ENCODE measurements at regions of chr10 and their contacts with region 1.

Region 1: DNA sequence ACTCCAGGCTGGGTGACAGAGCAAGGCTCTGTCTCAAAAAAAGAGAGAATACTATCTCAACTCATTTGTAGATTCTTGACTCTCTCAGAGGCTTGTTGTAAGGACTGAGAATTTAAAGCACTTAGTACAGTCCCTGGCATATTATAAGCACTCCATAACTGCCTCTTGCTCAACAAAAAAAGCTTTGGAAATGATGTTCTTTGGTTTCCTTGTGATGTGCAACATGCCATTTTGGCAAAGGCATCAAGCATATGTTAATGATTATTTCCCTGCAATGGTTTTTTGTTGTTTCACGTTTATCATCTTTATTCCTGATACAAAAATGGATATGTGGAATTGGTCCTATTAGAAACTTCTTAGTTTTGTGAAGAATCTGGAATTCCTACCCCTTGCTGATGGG is 15.7 kb downstream of the NOLC1 start:
- DNase-seq: no peak
- H3K4me3 ChIP-seq: no peak overlapping the region
- H3K27ac ChIP-seq: no peak overlapping the region
- H3K4me1 ChIP-seq: no peaks in the 10 kb centered on the region
- H3K27me3 ChIP-seq: no peaks in the 10 kb centered on the region
- CTCF ChIP-seq: no peak

Region 2: DNA sequence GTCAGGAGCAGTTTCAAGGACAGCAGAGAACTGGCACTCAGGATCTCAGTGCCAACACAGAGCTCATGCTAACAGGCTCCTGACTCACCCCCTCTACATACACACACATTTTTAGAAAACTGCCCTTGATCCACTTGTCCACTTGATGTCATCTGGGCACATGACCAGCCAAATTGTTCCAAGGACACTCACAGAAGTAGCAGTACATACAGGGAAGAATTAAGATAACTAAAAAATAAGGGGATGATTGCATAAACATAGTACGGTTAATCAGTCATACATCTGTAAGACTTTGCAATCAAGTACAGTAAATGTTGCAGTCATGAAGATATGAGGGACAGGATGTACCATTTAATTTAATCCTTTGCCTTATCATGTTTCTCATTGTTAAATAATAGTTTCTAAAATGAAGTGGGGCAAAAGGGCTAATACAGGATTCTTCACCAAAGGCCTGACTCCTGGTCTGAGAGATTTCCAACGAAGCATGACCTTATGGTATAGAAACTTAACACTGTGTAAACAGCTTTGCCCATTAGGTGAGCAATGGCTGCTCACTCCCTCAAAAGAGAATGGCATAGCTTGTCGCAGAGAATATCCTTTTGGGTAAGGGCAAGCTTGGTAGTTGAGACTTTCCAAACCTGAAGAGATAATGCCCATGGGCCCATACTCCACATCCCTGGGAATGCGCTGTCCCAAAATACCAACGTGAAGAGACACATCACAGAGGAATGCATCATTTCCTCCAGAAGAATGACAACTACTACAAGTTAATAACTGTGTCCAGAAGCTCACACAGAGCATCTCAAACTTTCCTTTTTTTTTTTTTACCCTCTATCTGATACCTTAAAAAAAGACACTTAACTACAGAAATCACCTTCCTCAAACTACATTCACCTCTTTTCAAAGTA is 206.0 kb before region 1 on chr10:
- CTCF ChIA-PET with region 1: no interaction called
- dilution Hi-C with region 1: no loop called
- in situ Hi-C with region 1: no loop called
- intact Hi-C with region 1: no loop called
- DNase-seq: no peak
- H3K4me3 ChIP-seq: no peak overlapping the region
- H3K27ac ChIP-seq: no peak overlapping the region
- H3K4me1 ChIP-seq: no peaks in the 10 kb centered on the region
- H3K27me3 ChIP-seq: no peaks in the 10 kb centered on the region
- CTCF ChIP-seq: no peak

Region 3: DNA sequence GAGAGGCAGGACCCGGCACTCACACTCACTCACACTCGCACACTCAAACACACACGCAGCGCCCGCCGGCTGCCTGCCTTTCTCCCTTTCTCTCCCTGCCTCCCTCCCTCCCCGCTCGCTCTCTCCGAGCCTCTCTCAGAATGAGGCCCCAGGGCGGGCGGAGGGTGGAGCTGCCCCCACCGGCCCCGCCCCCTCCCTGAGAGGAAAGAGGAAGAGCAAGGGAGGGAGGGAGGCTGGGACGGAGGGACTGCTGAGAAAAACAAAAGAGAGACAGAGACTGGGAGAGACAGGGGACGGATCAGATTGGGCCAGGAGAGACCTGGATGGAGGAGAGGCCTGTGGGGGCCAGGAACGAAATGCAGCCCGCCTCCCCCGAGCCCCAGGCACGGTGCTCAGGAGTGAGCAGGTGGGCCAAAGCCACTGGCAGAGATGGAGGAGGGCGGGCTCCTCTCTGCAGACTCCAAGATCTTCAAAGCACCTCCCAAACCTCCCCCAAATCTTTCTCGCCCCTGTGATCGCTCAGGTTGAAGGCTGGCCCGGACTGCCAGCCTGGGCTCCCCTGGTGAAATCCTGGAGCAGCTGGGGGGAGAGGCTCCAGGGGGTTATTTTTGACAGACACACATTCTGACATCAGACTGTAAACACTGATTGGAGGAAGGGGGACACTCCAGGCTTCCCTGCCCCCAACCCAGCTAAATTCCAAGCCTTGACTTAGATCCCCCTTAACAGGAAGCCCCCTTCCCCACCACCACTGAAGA is 52.8 kb before region 1 on chr10:
- CTCF ChIA-PET with region 1: no interaction called
- dilution Hi-C with region 1: loop called (anchors 5 kb)
- in situ Hi-C with region 1: no loop called
- intact Hi-C with region 1: no loop called
- DNase-seq: peak; percentile 85
- H3K4me3 ChIP-seq: peak overlapping the region; percentile 28 to 92 (median 62)
- H3K27ac ChIP-seq: no peak overlapping the region
- H3K4me1 ChIP-seq: peaks cover 55% of the 10 kb centered on the region
- H3K27me3 ChIP-seq: no peaks in the 10 kb centered on the region
- CTCF ChIP-seq: no peak

Region 4: DNA sequence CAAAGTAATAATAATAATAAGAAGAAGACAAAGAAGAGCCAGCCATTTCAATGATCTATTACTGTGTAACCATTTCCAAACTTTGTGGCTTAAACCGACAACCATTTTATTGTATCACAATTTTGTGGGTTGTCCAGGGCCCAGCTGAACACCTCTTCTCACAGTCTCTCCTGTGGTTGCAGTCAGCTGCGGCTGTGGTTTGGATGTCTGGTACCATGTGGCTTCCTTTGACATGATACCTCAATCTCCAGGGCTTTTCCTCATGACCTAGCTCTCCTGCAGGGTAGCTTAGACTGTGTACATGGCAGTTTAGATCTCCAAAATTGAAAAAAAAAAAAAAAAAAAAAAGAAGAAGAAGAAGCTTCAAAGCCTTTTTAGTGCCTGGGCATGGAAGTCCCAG is 155.1 kb after region 1 on chr10:
- CTCF ChIA-PET with region 1: no interaction called
- dilution Hi-C with region 1: no loop called
- in situ Hi-C with region 1: no loop called
- intact Hi-C with region 1: no loop called
- DNase-seq: no peak
- H3K4me3 ChIP-seq: no peak overlapping the region
- H3K27ac ChIP-seq: no peak overlapping the region
- H3K4me1 ChIP-seq: no peaks in the 10 kb centered on the region
- H3K27me3 ChIP-seq: no peaks in the 10 kb centered on the region
- CTCF ChIP-seq: no peak

Region 5: DNA sequence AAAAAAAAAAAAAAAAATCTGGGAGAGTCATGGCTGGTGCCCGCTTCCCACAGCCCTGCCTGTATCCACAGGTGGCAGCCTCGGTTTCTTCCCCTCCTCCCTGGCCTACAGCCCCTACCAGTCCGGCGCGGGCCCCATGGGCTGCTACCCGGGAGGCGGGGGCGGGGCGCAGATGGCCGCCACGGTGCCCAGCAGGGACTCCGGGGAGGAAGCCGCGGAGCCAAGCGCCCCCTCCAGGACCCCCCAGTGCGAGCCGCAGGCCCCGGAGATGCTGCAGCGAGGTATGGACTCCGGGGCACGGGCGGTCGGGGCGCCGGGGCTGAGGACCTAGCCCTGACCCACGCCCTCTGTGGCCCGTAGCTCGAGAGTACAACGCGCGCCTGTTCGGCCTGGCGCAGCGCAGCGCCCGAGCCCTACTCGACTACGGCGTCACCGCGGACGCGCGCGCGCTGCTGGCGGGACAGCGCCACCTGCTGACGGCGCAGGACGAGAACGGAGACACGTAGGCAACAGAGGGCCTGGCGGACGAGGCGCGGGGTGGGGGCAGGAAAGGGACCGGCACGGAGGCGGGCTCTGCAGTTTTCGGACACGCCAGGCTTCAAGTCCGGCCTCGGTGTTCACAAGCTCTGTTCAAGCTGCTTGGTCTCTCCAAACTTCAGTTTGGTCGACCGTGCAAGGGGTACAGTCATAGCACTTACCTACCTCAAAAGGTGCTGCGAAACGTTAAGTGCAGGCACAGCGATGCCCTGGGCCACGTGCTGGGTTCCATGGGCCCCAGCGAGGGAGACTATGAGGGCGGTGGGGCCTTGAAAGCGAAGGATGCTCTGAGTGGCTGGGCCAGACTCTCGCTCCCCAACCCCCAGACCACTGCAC is 231.6 kb after region 1 on chr10:
- CTCF ChIA-PET with region 1: interaction called, 4 read pairs
- dilution Hi-C with region 1: no loop called
- in situ Hi-C with region 1: no loop called
- intact Hi-C with region 1: loop called (anchors 1 kb)
- DNase-seq: peak; percentile 78
- H3K4me3 ChIP-seq: peak overlapping the region in 2 of 3 experiments; percentile 38 to 50
- H3K27ac ChIP-seq: no peak overlapping the region
- H3K4me1 ChIP-seq: peaks cover 38% of the 10 kb centered on the region
- H3K27me3 ChIP-seq: no peaks in the 10 kb centered on the region
- CTCF ChIP-seq: peak; percentile 73 to 94

Region 6: DNA sequence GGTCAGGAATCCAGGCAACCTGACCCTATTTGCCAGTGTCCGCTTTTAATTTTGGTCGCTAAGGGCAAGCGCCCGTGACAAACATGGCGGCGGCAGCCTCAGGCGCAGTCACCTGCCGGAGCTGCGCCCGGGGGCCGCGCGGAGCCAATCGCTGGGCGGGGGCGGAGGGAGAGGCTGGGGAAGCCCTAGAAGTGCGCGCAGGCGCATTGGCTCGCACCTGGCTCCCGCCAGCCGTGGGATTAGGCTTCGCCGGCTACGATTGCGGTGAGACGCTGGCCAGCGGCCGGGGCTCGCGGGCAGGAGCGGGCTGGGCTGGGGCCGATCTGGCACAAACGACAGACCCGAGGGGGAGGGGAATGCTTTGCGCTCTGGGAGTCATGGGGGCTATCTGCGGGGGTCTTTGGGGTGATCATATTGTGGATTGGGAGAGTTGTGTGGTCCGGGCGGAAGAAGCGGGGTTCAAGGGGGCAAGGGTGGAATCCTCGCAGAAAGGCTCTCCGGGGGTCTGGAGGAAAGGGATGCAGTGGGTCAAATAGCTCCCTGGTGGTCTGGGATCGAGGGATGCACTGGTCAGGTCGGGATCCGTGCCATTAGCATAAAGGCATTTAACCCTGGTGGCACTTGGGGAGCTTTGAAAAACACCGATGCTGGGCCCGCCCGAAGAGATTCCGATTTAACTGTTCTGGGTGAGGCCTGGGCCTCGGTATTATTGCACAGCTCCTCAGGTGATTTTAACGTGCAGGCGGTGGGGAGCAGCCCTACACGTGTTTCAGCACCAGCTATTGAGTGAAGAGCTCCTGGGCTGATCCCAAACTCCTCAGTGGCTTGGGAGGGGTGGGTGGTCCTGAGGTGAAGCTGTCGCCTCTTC is 293.6 kb after region 1 on chr10:
- CTCF ChIA-PET with region 1: no interaction called
- dilution Hi-C with region 1: no loop called
- in situ Hi-C with region 1: no loop called
- intact Hi-C with region 1: loop called (anchors 1 kb)
- DNase-seq: peak; percentile 88
- H3K4me3 ChIP-seq: peak overlapping the region; percentile 43 to 56 (median 54)
- H3K27ac ChIP-seq: peak overlapping the region; percentile 9
- H3K4me1 ChIP-seq: peaks cover 11% of the 10 kb centered on the region
- H3K27me3 ChIP-seq: no peaks in the 10 kb centered on the region
- CTCF ChIP-seq: no peak

Region 7: DNA sequence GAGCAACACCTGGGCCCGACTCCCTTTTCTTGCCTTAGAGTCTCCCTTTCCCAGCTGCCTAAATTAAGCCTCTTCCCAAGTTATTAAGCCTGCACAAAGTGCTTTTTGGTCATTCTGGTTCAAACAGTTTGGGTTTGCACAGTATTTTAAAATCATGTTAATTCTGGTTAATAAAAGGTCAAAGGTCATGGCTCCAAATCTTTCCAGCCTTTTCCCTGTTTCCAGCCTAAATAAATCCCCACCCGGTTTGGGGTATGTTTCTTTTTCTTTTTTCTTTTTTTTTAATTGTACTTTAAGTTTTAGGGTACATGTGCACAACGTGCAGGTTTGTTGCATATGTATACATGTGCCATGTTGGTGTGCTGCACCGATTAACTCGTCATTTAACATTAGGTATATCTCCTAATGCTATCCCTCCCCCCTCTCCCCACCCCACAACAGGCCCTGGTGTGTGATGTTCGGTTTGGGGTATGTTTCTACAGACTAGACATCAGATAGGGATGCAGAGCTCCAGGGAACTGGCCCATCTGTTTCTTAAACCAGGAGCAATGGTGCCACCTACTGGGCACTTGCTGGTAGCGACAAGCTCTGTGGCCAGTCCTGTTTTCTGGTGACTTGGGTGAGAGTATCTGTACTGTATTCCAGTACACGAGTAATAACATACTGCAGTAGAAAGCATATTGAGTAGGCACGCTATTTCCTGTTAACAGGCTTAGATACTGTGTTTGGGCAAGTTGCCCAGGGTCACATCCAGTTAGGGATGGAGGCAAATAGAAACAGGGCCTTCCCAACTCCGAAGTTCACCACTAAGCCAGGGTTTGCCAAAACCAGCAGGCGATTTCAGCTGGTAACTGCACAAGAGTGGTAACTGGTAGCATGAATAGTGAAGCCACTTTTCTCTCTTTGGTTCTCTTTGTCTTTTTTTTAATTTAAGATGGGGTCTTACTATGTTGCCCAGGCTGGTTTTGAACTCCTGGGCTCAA is 415.9 kb after region 1 on chr10:
- CTCF ChIA-PET with region 1: no interaction called
- dilution Hi-C with region 1: no loop called
- in situ Hi-C with region 1: no loop called
- intact Hi-C with region 1: loop called (anchors 1 kb)
- DNase-seq: peak; percentile 66
- H3K4me3 ChIP-seq: no peak overlapping the region
- H3K27ac ChIP-seq: no peak overlapping the region
- H3K4me1 ChIP-seq: no peaks in the 10 kb centered on the region
- H3K27me3 ChIP-seq: no peaks in the 10 kb centered on the region
- CTCF ChIP-seq: peak; percentile 89 to 91

Measured in mammary epithelial cell (primary cell).